ENCODE measurements at regions of chr7 and their contacts with region 1.

Region 1: DNA sequence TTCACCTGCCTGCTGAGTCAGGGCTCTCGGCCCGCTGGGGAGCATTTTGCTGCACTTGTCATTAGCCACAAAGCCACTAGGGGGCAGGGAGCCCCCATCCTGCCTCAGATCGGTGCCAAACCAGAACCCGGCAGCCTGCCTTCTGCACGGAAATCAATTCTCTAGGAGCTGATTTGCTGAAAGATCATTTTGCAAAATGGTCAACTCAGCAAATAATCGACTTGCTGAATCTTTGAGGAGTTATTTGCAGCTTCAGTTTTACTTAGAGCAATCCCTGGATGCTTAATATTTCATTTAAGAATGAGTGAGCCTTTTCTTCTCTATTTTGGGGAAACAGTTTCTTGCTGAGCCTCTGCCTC is 1.7 kb upstream of the GIMAP8 start:
- DNase-seq: peak; percentile 83 to 94 (median 88)
- ATAC-seq: peak; percentile 58
- H3K4me3 ChIP-seq: peak overlapping the region; percentile 96
- H3K4me3 Mint-ChIP-seq: peak overlapping the region; percentile 98
- H3K27ac ChIP-seq: peak overlapping the region; percentile 82 to 92
- H3K27ac Mint-ChIP-seq: peak overlapping the region; percentile 78
- H3K4me1 ChIP-seq: peaks cover 69% of the 10 kb centered on the region
- H3K4me1 Mint-ChIP-seq: peaks cover 54% of the 10 kb centered on the region
- H3K27me3 ChIP-seq: no peaks in the 10 kb centered on the region
- H3K27me3 Mint-ChIP-seq: no peaks in the 10 kb centered on the region
- CTCF ChIP-seq: peak; percentile 93

Region 2: DNA sequence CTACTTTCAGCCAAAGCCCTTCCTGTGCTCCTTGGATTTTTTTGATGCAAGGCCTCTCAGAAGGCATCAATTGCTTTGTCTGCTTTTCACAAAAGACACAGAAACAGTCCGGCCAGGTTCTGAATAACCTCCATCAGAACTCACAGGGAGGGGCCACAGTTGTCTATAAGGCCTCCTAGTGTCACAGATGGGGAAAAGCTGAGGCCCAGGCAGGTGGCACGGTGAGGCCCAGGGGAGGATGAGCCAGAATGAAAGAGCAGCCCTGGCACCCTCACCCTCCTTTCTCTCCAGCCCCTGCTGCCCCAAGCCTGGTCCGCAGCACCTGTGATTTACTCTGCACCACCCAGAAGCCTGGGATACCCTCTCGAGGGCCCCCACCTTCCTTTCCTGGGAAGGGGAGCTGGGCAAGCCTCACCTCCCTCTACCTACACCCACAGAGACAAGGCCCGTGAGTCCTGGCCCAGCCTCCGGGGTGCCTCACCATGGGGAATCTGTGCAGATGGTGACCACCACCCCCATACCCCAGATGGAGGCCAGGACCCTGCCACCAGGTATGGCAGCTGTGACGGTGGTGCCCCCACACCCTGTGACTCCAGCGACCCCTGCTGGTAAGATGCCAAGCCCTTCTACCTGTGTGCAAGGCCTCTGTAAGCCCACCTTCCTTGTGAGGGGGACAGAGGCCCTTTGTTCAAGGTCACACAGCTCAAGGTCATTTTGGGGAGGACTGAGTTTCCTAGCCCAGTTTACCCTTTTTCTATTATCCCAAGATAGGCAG is 649.2 kb before region 1 on chr7:
- CTCF ChIA-PET with region 1: no interaction called
- POLR2A ChIA-PET with region 1: no interaction called
- intact Hi-C with region 1: no loop called
- DNase-seq: peak; percentile 49 to 78 (median 64)
- ATAC-seq: peak; percentile 73
- H3K4me3 ChIP-seq: no peak overlapping the region
- H3K4me3 Mint-ChIP-seq: no peak overlapping the region
- H3K27ac ChIP-seq: no peak overlapping the region
- H3K27ac Mint-ChIP-seq: no peak overlapping the region
- H3K4me1 ChIP-seq: no peaks in the 10 kb centered on the region
- H3K4me1 Mint-ChIP-seq: no peaks in the 10 kb centered on the region
- H3K27me3 ChIP-seq: no peaks in the 10 kb centered on the region
- H3K27me3 Mint-ChIP-seq: no peaks in the 10 kb centered on the region
- CTCF ChIP-seq: peak; percentile 66

Region 3: DNA sequence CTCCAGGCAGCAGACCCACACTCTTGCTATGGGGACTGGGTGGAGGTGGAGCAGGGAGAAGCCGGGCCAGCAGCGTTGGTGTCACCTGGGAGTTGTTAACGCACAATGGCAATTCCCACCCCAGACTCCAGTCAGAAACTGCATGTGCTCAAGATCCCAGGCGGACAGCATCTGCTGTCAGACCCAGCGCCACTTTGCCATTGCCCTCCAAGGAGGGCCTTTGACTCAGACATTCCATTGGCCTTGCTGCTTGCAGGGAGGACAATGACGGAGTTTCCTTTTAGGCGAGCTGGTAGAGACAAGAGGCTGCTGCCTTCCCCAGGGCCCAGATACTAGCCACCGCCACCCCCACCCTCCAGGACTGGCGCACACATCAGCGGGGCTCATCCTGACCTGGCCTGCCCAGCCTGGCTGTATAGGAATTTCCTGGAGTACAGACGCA is 35.1 kb before region 1 on chr7:
- CTCF ChIA-PET with region 1: no interaction called
- POLR2A ChIA-PET with region 1: no interaction called
- intact Hi-C with region 1: no loop called
- DNase-seq: no peak
- ATAC-seq: no peak
- H3K4me3 ChIP-seq: no peak overlapping the region
- H3K4me3 Mint-ChIP-seq: no peak overlapping the region
- H3K27ac ChIP-seq: no peak overlapping the region
- H3K27ac Mint-ChIP-seq: no peak overlapping the region
- H3K4me1 ChIP-seq: peaks cover 3% of the 10 kb centered on the region
- H3K4me1 Mint-ChIP-seq: peaks cover 3% of the 10 kb centered on the region
- H3K27me3 ChIP-seq: no peaks in the 10 kb centered on the region
- H3K27me3 Mint-ChIP-seq: no peaks in the 10 kb centered on the region
- CTCF ChIP-seq: no peak

Region 4: GRCh38 chr7:150476285-150476684 is 27.5 kb after region 1 on chr7:
- CTCF ChIA-PET with region 1: interaction called, 9 read pairs
- POLR2A ChIA-PET with region 1: interaction called, 296 read pairs
- intact Hi-C with region 1: loop called (anchors 2 kb)
- DNase-seq: no peak
- ATAC-seq: no peak
- H3K4me3 ChIP-seq: no peak overlapping the region
- H3K4me3 Mint-ChIP-seq: peak overlapping the region; percentile 25
- H3K27ac ChIP-seq: peak overlapping the region; percentile 92 to 95
- H3K27ac Mint-ChIP-seq: peak overlapping the region; percentile 97
- H3K4me1 ChIP-seq: peaks cover 72% of the 10 kb centered on the region
- H3K4me1 Mint-ChIP-seq: peaks cover 92% of the 10 kb centered on the region
- H3K27me3 ChIP-seq: no peaks in the 10 kb centered on the region
- H3K27me3 Mint-ChIP-seq: no peaks in the 10 kb centered on the region
- CTCF ChIP-seq: no peak

Region 5: GRCh38 chr7:150507947-150508602 is 59.3 kb after region 1 on chr7:
- CTCF ChIA-PET with region 1: interaction called, 51 read pairs
- POLR2A ChIA-PET with region 1: interaction called, 499 read pairs
- intact Hi-C with region 1: no loop called
- DNase-seq: peak in 5 of 14 experiments; percentile 46 to 54 (median 49)
- ATAC-seq: peak; percentile 43
- H3K4me3 ChIP-seq: peak overlapping the region; percentile 38
- H3K4me3 Mint-ChIP-seq: peak overlapping the region; percentile 84
- H3K27ac ChIP-seq: peak overlapping the region; percentile 3 to 71
- H3K27ac Mint-ChIP-seq: peak overlapping the region; percentile 93
- H3K4me1 ChIP-seq: peaks cover 77% of the 10 kb centered on the region
- H3K4me1 Mint-ChIP-seq: peaks cover 95% of the 10 kb centered on the region
- H3K27me3 ChIP-seq: no peaks in the 10 kb centered on the region
- H3K27me3 Mint-ChIP-seq: no peaks in the 10 kb centered on the region
- CTCF ChIP-seq: no peak

Region 6: DNA sequence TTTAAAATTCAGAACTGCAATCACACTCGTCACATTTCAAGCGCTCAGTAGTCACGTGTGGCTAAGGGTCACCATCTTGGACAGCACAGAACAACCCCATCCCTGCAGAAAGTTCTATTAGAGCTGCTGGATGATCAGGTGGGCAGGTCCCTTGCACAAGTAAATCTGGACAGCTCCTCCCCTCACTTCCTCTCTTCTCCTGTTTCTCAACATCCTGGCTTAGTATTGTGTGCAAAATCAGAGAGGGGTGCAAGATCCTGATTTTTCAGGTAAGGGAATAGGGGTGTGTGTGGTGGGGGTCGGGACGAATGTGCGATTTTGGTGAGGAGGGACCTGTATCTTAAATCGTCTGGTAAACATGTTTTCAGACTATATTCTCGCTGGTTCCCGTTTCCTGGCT is 118.4 kb after region 1 on chr7 and contains the start of gene GIMAP4:
- CTCF ChIA-PET with region 1: interaction called, 29 read pairs
- POLR2A ChIA-PET with region 1: interaction called, 161 read pairs
- intact Hi-C with region 1: loop called (anchors 1 to 2 kb)
- DNase-seq: peak in 10 of 14 experiments; percentile 27 to 71 (median 46)
- ATAC-seq: peak; percentile 45
- H3K4me3 ChIP-seq: peak within 1 kb of the TSS; percentile 72
- H3K4me3 Mint-ChIP-seq: peak within 1 kb of the TSS; percentile 98
- H3K27ac ChIP-seq: peak within 1 kb of the TSS; percentile 60 to 81
- H3K27ac Mint-ChIP-seq: peak within 1 kb of the TSS; percentile 88
- H3K4me1 ChIP-seq: peaks cover 68% of the 10 kb centered on the region
- H3K4me1 Mint-ChIP-seq: peaks cover 84% of the 10 kb centered on the region
- H3K27me3 ChIP-seq: no peaks in the 10 kb centered on the region
- H3K27me3 Mint-ChIP-seq: no peaks in the 10 kb centered on the region
- CTCF ChIP-seq: no peak
- total RNA-seq, gene GIMAP4: 20.7 to 23.6 TPM

Region 7: DNA sequence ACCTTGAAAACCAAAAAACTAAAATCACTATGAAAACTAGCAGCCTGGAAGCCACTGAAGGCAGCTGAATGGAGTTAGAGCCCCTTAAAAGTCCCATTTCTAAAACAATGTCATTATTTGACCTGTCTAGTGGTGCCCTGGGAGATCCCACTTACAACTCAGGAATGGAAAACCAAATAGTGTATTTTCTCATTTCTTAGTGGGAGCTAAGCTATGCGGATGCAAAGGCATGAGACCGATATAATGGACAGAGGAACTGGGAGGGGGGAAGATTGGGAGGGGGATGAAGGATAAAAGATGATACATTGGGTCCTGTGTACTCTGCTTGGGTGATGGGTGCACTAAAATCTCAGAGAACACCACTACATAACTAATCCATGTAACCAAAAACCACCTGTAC is 226.9 kb after region 1 on chr7:
- CTCF ChIA-PET with region 1: interaction called, 6 read pairs
- POLR2A ChIA-PET with region 1: interaction called, 15 read pairs
- intact Hi-C with region 1: no loop called
- DNase-seq: no peak
- ATAC-seq: no peak
- H3K4me3 ChIP-seq: peak overlapping the region; percentile 8
- H3K4me3 Mint-ChIP-seq: peak overlapping the region; percentile 78
- H3K27ac ChIP-seq: peak overlapping the region; percentile 58 to 78
- H3K27ac Mint-ChIP-seq: peak overlapping the region; percentile 79
- H3K4me1 ChIP-seq: peaks cover 40% of the 10 kb centered on the region
- H3K4me1 Mint-ChIP-seq: peaks cover 87% of the 10 kb centered on the region
- H3K27me3 ChIP-seq: no peaks in the 10 kb centered on the region
- H3K27me3 Mint-ChIP-seq: no peaks in the 10 kb centered on the region
- CTCF ChIP-seq: no peak

Region 8: GRCh38 chr7:150737265-150738055 is 288.7 kb after region 1 on chr7 and contains the start of gene GIMAP5:
- CTCF ChIA-PET with region 1: interaction called, 16 read pairs
- POLR2A ChIA-PET with region 1: interaction called, 64 read pairs
- intact Hi-C with region 1: loop called (anchors 1 to 5 kb)
- DNase-seq: peak in 12 of 14 experiments; percentile 29 to 78 (median 70)
- ATAC-seq: peak; percentile 75
- H3K4me3 ChIP-seq: peak within 1 kb of the TSS; percentile 65
- H3K4me3 Mint-ChIP-seq: peak within 1 kb of the TSS; percentile 96
- H3K27ac ChIP-seq: peak within 1 kb of the TSS; percentile 80 to 87
- H3K27ac Mint-ChIP-seq: peak within 1 kb of the TSS; percentile 87
- H3K4me1 ChIP-seq: peaks cover 59% of the 10 kb centered on the region
- H3K4me1 Mint-ChIP-seq: peaks cover 74% of the 10 kb centered on the region
- H3K27me3 ChIP-seq: no peaks in the 10 kb centered on the region
- H3K27me3 Mint-ChIP-seq: no peaks in the 10 kb centered on the region
- CTCF ChIP-seq: no peak
- total RNA-seq, gene GIMAP5: 31.3 to 35.2 TPM

Region 9: GRCh38 chr7:150876817-150877526 is 428.2 kb after region 1 on chr7:
- CTCF ChIA-PET with region 1: interaction called, 3 read pairs
- POLR2A ChIA-PET with region 1: no interaction called
- intact Hi-C with region 1: loop called in 1 of 2 experiments (anchors 10 kb)
- DNase-seq: peak; percentile 27 to 81 (median 42)
- ATAC-seq: peak; percentile 74
- H3K4me3 ChIP-seq: no peak overlapping the region
- H3K4me3 Mint-ChIP-seq: no peak overlapping the region
- H3K27ac ChIP-seq: no peak overlapping the region
- H3K27ac Mint-ChIP-seq: no peak overlapping the region
- H3K4me1 ChIP-seq: peaks cover 15% of the 10 kb centered on the region
- H3K4me1 Mint-ChIP-seq: peaks cover 24% of the 10 kb centered on the region
- H3K27me3 ChIP-seq: no peaks in the 10 kb centered on the region
- H3K27me3 Mint-ChIP-seq: peaks cover under 1% of the 10 kb centered on the region
- CTCF ChIP-seq: peak; percentile 42